OCI-LY7 (cell line): ENCODE measurements at regions of chr10 and their contacts with region 1.

Region 1: DNA sequence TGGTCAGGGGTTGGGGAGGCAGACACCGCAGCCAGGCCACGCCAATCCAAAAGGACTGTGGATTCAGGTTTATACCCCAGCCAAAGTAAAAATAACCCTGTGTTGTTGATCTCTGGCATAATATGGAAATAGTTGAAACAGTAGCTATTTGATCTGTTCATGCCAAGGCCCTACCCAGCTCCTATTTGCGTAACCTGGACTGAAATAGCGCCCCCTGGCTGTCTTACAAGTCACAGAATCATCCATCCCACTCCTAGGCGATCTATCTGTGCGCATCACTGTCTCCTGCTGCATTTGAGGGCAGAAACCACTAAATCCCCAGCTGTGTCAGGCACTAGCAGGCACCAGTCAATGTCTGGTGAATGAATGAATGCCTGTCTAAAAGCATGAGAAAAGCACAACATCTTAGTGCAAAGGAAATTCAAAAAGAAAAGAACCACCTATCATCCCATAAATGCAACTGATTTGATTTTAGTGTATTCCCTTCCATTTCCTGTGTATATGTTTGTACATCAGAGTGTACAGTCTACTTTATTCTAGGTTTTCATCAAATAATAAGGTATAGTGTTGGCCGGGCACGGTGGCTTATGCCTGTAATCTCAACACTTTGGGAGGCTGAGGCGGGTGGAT is 160.0 kb downstream of the SLIT1 start:
- DNase-seq: peak; percentile 77
- H3K4me3 ChIP-seq: no peak overlapping the region
- H3K27ac ChIP-seq: no peak overlapping the region
- H3K4me1 ChIP-seq: peaks cover 43% of the 10 kb centered on the region
- CTCF ChIP-seq: peak; percentile 94

Region 2: DNA sequence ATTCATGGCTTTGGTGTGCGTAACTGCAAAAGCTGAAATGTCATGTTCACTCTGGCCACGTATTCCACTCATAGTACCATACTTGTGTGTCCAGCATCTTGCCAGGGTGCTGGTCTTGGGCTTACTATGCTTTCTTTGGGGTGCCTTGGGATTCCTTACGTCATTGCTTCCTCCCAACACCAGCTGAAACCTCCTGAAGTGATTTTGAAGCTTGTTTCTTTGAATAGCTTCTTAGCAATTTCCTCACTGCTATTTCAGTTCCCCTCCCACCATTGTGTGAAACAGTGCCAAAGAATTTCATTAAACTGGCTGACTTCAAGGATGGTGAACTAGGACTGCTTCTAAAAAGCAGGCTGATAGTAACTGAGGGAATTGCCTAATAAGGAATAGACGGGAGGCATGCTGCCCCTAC is 1232.8 kb before region 1 on chr10:
- CTCF ChIA-PET with region 1: no interaction called
- POLR2A ChIA-PET with region 1: no interaction called
- intact Hi-C with region 1: no loop called
- DNase-seq: no peak
- H3K4me3 ChIP-seq: no peak overlapping the region
- H3K27ac ChIP-seq: no peak overlapping the region
- H3K4me1 ChIP-seq: no peaks in the 10 kb centered on the region
- CTCF ChIP-seq: no peak

Region 3: GRCh38 chr10:96395931-96396877 is 629.5 kb before region 1 on chr10:
- CTCF ChIA-PET with region 1: no interaction called
- POLR2A ChIA-PET with region 1: no interaction called
- intact Hi-C with region 1: loop called (anchors 10 kb)
- DNase-seq: peak; percentile 68
- H3K4me3 ChIP-seq: no peak overlapping the region
- H3K27ac ChIP-seq: no peak overlapping the region
- H3K4me1 ChIP-seq: no peaks in the 10 kb centered on the region
- CTCF ChIP-seq: peak; percentile 94

Region 4: DNA sequence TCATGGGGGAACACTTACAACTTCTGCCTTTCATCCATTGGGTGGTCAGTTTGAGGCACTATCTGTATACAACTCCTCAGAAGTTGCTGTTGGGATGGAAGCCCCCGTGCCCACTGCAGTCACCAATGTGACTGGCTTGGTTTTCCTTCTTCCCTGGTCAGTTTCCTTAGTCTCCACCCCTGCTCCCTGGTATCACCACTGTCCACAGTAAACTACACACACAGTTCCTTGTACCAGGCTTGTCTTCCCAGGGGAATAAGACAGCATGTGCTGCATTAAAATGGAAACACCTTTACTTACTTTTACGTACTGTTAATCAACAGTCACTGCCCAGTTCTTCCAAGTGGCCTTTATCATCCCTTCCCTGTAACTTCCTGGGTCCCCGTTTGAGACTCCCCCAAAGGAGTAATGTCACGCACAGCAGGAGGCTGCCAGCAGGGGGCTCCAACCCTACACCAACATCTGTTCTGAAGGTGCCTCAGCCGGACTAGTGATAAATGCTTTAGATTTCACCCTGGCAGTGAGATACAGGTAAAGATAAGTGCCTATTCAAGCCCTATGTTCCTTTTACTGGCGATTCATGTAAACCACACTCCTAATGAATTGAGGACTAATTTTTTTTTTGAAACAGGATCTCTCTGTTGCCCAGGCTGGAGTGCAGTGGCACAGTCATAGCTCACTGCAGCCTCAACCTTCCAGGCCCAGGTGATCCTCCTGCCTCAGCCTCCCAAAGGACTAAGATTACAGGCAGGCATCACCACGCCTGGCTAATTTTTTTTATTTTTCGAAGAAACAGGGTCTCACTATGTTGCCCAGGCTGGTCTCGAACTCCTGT is 260.1 kb before region 1 on chr10:
- CTCF ChIA-PET with region 1: no interaction called
- POLR2A ChIA-PET with region 1: interaction called, 3 read pairs
- intact Hi-C with region 1: loop called (anchors 1 kb)
- DNase-seq: peak; percentile 90
- H3K4me3 ChIP-seq: peak overlapping the region; percentile 1
- H3K27ac ChIP-seq: peak overlapping the region; percentile 75
- H3K4me1 ChIP-seq: peaks cover 38% of the 10 kb centered on the region
- CTCF ChIP-seq: peak; percentile 100

Region 5: GRCh38 chr10:96910488-96911395 is 115.0 kb before region 1 on chr10:
- CTCF ChIA-PET with region 1: interaction called, 3 read pairs
- POLR2A ChIA-PET with region 1: no interaction called
- intact Hi-C with region 1: loop called (anchors 1 kb)
- DNase-seq: peak; percentile 62
- H3K4me3 ChIP-seq: no peak overlapping the region
- H3K27ac ChIP-seq: no peak overlapping the region
- H3K4me1 ChIP-seq: peaks cover 5% of the 10 kb centered on the region
- CTCF ChIP-seq: peak; percentile 97